ENCODE measurements at regions of chr9 and their contacts with region 1.

Region 1: GRCh38 chr9:70602321-70603019 is 188.0 kb upstream of the KLF9 start:
- DNase-seq: peak; percentile 59 to 71
- ATAC-seq: peak; percentile 89 to 97
- H3K4me3 ChIP-seq: no peak overlapping the region
- H3K27ac ChIP-seq: peak overlapping the region; percentile 15 to 36; a peak in 2 of 6 replicates
- H3K4me1 ChIP-seq: no peaks in the 10 kb centered on the region
- CTCF ChIP-seq: peak; percentile 90
- EP300 ChIP-seq: no peak
- POLR2A ChIP-seq: no peak
- RAD21 ChIP-seq: peak; percentile 93 to 94

Region 2: DNA sequence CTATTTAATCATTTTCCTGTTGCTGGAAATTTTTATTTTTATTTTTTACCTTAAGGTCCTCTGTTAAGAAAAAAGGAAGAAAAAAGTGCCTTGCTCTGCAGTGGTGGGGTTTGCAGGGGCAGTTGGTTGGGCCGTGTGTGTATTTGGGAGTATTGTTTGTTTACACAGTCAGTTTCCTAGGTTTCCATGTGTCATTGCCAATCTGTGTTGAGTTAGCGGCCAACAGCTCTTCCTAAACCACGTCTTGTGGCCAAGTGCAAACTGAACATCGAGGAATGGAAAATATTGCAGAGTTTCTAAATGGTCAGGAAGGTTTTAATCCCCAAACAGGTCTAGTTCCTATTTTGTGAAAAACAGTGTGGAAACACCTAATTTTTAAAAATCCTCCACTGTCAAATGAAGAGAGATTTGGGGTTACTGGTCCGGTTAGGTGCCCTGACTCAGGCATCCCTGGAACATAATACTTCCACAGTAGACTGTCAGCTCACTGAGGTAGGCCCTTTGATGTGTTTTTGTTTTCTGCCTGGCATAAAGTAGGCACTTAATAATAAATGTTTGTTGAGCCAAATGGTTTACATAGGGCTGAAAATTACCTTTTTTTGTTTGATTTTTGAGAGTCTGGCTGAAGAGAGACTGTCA is 521.9 kb before region 1 on chr9:
- CTCF ChIA-PET with region 1: no interaction called
- POLR2A ChIA-PET with region 1: no interaction called
- DNase-seq: peak in 1 of 2 experiments; percentile 19
- ATAC-seq: peak in 1 of 2 experiments; percentile 46; a peak in 2 of 6 replicates
- H3K4me3 ChIP-seq: no peak overlapping the region
- H3K27ac ChIP-seq: no peak overlapping the region
- H3K4me1 ChIP-seq: no peaks in the 10 kb centered on the region
- CTCF ChIP-seq: no peak
- EP300 ChIP-seq: no peak
- POLR2A ChIP-seq: no peak
- RAD21 ChIP-seq: no peak

Region 3: DNA sequence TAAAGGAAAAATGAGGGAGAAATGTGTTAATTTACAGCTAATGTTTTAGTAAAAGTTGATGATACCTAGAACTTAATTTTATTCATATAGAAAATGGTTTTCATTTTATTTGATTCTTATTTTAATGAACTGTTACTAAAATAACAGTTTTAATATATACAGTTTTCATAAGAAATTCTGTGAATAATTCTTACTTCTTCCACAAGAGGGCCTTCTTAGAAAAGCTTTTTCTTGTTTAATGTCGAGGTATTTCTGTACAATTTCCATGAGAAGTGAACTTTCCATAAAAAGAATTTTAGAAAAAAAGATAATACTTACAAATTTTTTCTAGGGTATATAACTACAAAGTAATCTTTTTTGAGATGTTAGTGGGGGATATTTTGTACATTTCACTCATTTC is 261.9 kb before region 1 on chr9:
- CTCF ChIA-PET with region 1: interaction called, 38 read pairs
- POLR2A ChIA-PET with region 1: interaction called, 5 read pairs
- DNase-seq: peak; percentile 18 to 20
- ATAC-seq: no peak
- H3K4me3 ChIP-seq: no peak overlapping the region
- H3K27ac ChIP-seq: no peak overlapping the region
- H3K4me1 ChIP-seq: no peaks in the 10 kb centered on the region
- CTCF ChIP-seq: peak; percentile 52; the same call in 2 of the 3 replicates
- EP300 ChIP-seq: no peak
- POLR2A ChIP-seq: no peak
- RAD21 ChIP-seq: peak; percentile 61 to 68

Region 4: GRCh38 chr9:70352802-70353201 is 249.7 kb before region 1 on chr9:
- CTCF ChIA-PET with region 1: interaction called, 13 read pairs
- POLR2A ChIA-PET with region 1: no interaction called
- DNase-seq: peak in 1 of 2 experiments; percentile 9
- ATAC-seq: no peak
- H3K4me3 ChIP-seq: no peak overlapping the region
- H3K27ac ChIP-seq: no peak overlapping the region
- H3K4me1 ChIP-seq: peaks cover 4% of the 10 kb centered on the region; the same call in 1 of the 3 replicates
- CTCF ChIP-seq: peak; percentile 49
- EP300 ChIP-seq: no peak
- POLR2A ChIP-seq: no peak
- RAD21 ChIP-seq: peak; percentile 39 to 60; a peak in 3 of 5 replicates

Region 5: GRCh38 chr9:70413798-70414775 is 188.4 kb before region 1 on chr9 and contains the start of gene KLF9:
- CTCF ChIA-PET with region 1: interaction called, 7 read pairs
- POLR2A ChIA-PET with region 1: interaction called, 39 read pairs
- DNase-seq: peak; percentile 94 to 96
- ATAC-seq: peak; percentile 69 to 77
- H3K4me3 ChIP-seq: peak within 1 kb of the TSS; percentile 64
- H3K27ac ChIP-seq: peak within 1 kb of the TSS; percentile 82 to 89
- H3K4me1 ChIP-seq: peaks cover 13% of the 10 kb centered on the region; the same call in 2 of the 3 replicates
- CTCF ChIP-seq: no peak
- EP300 ChIP-seq: no peak
- POLR2A ChIP-seq: peak; percentile 28; the same call in 1 of the 2 replicates
- RAD21 ChIP-seq: no peak
- polyA plus RNA-seq, gene KLF9: 3.1 and 3.9 TPM in 2 replicates

Region 6: GRCh38 chr9:70586476-70586875 is 16.0 kb before region 1 on chr9:
- CTCF ChIA-PET with region 1: interaction called, 11 read pairs
- POLR2A ChIA-PET with region 1: no interaction called
- DNase-seq: no peak
- ATAC-seq: no peak
- H3K4me3 ChIP-seq: no peak overlapping the region
- H3K27ac ChIP-seq: no peak overlapping the region
- H3K4me1 ChIP-seq: no peaks in the 10 kb centered on the region
- CTCF ChIP-seq: no peak
- EP300 ChIP-seq: no peak
- POLR2A ChIP-seq: no peak
- RAD21 ChIP-seq: no peak

Region 7: DNA sequence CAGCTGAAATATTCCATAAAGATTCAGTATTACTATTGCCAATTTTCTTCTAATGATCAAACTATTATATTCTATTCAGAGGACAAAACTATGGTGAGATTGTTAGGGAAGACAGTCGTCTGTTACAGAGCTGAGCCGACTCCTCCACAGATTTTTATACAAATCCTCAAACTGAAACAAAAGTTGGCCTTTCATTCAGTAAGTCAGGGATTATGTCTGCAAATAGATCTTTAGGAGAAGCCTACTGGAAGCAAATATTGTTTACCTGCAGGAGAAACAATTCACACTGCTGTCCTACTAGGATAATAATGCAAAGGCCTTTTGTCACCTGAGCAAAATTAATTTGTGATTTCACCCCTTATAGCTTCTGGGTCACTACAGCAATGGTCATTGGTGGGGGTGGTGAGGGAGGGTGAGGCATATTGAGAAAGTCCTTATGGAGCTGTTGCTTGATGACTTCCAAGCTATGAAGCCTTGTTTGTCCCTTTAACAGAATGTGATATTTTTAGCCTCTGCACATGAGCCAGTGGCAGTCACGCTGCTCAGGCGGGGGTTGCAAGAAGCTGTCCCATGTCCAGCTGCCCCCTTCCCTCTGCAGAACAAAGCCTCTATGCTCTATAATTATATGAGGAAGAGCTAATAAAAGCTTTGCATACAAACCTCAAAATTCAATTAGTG is 12.5 kb after region 1 on chr9:
- CTCF ChIA-PET with region 1: interaction called, 26 read pairs
- POLR2A ChIA-PET with region 1: no interaction called
- DNase-seq: no peak
- ATAC-seq: no peak
- H3K4me3 ChIP-seq: no peak overlapping the region
- H3K27ac ChIP-seq: no peak overlapping the region
- H3K4me1 ChIP-seq: no peaks in the 10 kb centered on the region
- CTCF ChIP-seq: no peak
- EP300 ChIP-seq: no peak
- POLR2A ChIP-seq: no peak
- RAD21 ChIP-seq: no peak